Heart right ventricle (tissue), 16 donors: ENCODE measurements at regions of chr10 and their contacts with region 1.

Region 1: DNA sequence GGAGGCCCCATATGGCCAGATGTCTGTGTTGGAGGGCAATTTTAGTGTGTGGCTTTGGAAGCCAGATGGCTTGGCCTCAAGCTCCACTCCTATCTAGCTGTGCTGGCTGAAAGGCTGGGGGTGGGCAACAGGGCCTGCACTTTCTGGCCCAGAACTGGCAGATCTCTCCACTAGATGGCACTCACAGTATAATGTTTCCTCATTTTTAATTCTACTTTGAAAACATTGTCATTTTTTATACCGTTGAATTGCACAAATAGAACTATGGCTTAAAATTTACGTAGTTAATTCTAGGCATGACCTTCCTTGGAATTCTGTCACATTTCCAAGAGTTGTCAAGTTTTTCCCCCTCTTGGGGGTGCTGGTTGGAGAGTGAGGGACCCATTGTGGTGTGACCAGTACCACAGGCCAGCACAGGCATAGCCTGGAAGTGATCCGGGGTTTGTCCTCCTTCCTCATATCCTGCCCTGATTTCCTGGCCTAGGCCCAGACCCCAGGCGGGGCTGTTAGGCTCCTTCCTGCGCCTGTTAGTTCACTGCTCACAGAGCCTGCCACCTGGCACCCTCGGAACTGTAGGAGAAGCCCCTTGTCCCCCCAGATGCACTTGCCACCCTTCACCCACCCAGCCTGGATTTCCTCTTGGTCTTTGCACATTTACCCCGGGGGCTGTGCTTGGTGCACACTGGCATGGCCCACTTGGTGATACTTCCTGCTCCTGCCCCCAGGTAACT is 52.8 kb downstream of the ARHGAP22 start:
- DNase-seq: peak; percentile 31 to 43
- ATAC-seq: peak in 7 of 8 donors; percentile 46 to 71 (median 57)
- H3K4me3 ChIP-seq: no peak overlapping the region
- H3K27ac ChIP-seq: no peak overlapping the region
- H3K4me1 ChIP-seq: peaks cover 0 to 29% (median 9%) of the 10 kb centered on the region in 9 donors
- H3K27me3 ChIP-seq: no peaks in the 10 kb centered on the region
- CTCF ChIP-seq: peak; percentile 37 to 81 (median 75)

Region 2: GRCh38 chr10:48363617-48364355 is 188.2 kb before region 1 on chr10:
- intact Hi-C with region 1: loop called in 1 of 10 experiments (anchors 5 kb)
- DNase-seq: peak in 1 of 2 donors; percentile 52
- ATAC-seq: peak in 7 of 8 donors; percentile 51 to 88 (median 73)
- H3K4me3 ChIP-seq: no peak overlapping the region
- H3K27ac ChIP-seq: peak overlapping the region in 6 of 10 donors; percentile 3 to 71 (median 42)
- H3K4me1 ChIP-seq: peaks cover 0 to 60% (median 43%) of the 10 kb centered on the region in 9 donors
- H3K27me3 ChIP-seq: no peaks in the 10 kb centered on the region
- CTCF ChIP-seq: peak; percentile 50 to 85 (median 74)

Region 3: GRCh38 chr10:48608279-48608681 is 56.3 kb after region 1 on chr10:
- intact Hi-C with region 1: loop called in 5 of 10 experiments (anchors 5 to 10 kb)
- DNase-seq: no peak
- ATAC-seq: peak in 4 of 8 donors; percentile 24 to 63 (median 41)
- H3K4me3 ChIP-seq: no peak overlapping the region
- H3K27ac ChIP-seq: peak overlapping the region in 1 of 10 donors; percentile 83
- H3K4me1 ChIP-seq: peaks cover 0 to 70% (median 15%) of the 10 kb centered on the region in 9 donors
- H3K27me3 ChIP-seq: peaks cover 0 to 14% (median 9%) of the 10 kb centered on the region in 7 donors
- CTCF ChIP-seq: peak; percentile 57 to 73 (median 65)

Region 4: DNA sequence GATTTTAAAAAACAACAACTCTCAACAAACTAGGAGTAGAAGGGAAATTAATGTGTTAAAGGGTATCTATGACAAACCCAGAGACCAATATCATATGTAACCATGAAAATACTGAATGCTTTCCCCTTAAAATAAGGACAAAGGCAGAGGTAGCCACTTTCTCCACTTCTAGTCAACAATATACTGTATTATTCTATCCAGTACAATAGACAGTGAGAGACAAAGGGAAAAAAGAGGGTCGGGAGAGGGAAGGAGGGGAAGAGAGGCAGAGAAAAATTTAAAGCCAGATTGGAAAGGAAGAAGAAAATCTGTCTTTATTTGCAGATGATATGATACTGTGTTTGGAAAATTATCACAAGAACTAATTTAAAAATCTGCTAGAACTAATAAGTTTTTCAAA is 93.6 kb after region 1 on chr10:
- intact Hi-C with region 1: no loop called
- DNase-seq: no peak
- ATAC-seq: no peak
- H3K4me3 ChIP-seq: no peak overlapping the region
- H3K27ac ChIP-seq: no peak overlapping the region
- H3K4me1 ChIP-seq: no peaks in the 10 kb centered on the region
- H3K27me3 ChIP-seq: no peaks in the 10 kb centered on the region
- CTCF ChIP-seq: no peak

Region 5: GRCh38 chr10:49164559-49165188 is 612.6 kb after region 1 on chr10:
- intact Hi-C with region 1: loop called in 1 of 10 experiments (anchors 10 kb)
- DNase-seq: peak in 1 of 2 donors; percentile 34
- ATAC-seq: peak in 6 of 8 donors; percentile 27 to 73 (median 62)
- H3K4me3 ChIP-seq: no peak overlapping the region
- H3K27ac ChIP-seq: no peak overlapping the region
- H3K4me1 ChIP-seq: peaks cover 0 to 40% (median 13%) of the 10 kb centered on the region in 9 donors
- H3K27me3 ChIP-seq: no peaks in the 10 kb centered on the region
- CTCF ChIP-seq: peak; percentile 33 to 76 (median 66)